ENCODE measurements at regions of chr18 and their contacts with region 1.

Region 1: DNA sequence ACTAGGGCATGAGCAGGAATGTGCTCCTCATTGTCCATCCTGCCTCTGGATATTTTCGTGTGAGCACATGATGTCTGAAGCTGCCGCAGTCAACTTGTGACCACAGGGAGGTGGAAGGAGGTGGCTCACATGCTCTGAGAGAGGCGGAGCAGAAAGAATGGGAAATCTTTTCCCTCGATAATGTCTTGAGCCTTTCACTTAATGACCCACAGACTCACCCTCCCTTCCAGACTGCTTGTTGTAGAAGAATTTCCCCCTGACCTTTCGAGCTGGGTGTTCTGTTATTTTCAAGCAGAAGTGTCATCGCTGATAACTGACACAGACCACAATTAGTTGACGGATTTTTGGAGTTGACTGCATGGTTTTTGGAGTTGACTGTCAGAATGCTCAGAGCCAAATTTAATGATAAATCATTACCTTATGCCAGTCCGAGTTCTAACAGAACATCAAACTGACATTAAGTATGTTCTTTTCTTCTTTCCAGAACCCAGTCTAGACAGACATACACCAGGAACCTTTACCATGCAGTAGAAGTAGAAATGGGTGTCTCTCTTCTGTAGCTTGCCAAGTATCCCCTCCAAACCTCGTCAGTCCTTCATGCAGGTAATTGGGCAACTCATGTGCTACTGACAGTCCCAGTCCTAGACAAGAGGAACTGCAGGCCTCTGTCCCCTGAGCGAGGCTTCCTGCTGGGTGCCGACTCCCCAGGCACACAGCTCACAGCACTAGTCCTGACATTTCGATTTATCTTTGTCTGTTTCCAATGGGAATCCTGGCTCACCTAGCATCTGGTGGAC is 29.4 kb upstream of the RTTN start:
- DNase-seq: no peak
- H3K4me3 ChIP-seq: no peak overlapping the region
- CTCF ChIP-seq: no peak
- POLR2A ChIP-seq: no peak

Region 2: GRCh38 chr18:70310560-70311320 is 75.9 kb after region 1 on chr18:
- intact Hi-C with region 1: loop called (anchors 2 kb)
- DNase-seq: no peak
- H3K4me3 ChIP-seq: no peak overlapping the region
- CTCF ChIP-seq: no peak
- POLR2A ChIP-seq: no peak

Region 3: DNA sequence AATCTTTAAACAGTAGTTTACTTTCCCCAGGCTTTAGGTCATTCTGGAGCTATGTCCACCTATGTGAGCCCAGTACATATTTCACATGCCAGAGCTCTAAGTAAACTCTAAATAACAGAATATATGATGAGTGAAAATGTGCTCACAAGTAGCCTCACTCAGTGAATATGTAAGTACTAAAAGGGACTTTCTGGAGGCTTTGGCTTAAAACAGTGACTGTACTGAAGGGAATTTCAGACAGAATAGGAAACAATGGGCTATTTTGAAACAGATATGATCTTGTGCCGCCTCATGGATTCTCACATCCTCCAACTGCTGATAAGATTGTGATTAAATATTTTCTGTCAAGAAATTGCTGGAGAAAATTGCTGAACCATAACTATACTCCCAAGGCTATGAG is 801.9 kb after region 1 on chr18:
- intact Hi-C with region 1: no loop called
- DNase-seq: no peak
- H3K4me3 ChIP-seq: no peak overlapping the region
- CTCF ChIP-seq: no peak
- POLR2A ChIP-seq: no peak

Region 4: GRCh38 chr18:71754246-71754645 is 1519.4 kb after region 1 on chr18:
- intact Hi-C with region 1: no loop called
- DNase-seq: no peak
- H3K4me3 ChIP-seq: no peak overlapping the region
- CTCF ChIP-seq: no peak
- POLR2A ChIP-seq: no peak